H1 (cell line): ENCODE measurements at regions of chr2 and their contacts with region 1.

Region 1: DNA sequence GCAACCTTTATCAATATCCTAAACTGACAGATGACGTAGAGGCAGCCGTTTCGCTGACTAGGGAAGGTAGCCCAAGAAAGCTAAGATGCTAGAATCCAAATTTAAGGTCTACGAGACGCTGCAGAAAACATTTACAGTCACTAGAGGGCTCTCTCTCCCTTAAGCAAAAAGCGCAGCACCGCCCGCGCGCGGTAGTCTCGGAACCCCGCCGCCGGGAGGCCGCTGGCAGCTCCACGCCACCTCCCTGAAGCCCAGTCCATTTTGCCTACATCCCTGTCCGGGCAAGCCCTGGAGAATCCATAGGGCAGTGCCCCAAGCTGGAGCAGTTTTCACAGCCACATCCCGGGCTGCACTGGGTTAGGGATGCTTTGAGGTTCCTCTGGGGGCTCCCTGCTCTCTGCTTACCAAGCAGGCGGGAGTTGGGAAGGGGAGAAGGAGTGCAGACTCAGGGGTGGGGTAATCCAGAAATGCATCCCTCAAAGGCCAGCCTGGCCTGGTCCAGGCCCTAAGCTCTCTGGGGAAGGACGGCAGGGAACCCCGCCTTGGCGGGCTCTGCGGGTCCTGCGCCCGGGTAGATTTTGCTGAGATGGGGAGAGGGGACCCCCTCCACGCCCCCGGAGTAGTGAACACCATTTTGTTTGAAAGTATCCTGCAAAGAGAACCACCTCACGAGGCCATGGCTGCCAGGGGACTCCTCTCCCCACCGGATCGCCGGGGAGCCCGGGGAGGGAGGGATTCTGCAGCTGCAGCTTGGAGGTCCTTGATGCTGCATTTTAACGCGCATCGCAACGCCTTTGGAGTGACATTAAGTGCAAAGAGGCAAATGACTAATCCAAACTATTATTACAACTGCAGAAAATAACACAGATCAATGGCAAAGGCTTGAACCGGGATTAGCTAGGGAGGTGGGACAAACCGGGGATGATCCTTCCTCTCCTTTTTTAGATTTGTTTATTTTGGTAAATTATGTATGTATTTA is 1.3 kb upstream of the DPYSL5 start:
- DNase-seq: peak in 1 of 2 experiments; percentile 86
- H3K4me3 ChIP-seq: peak overlapping the region; percentile 54 to 91 (median 70); a peak in 7 of 8 replicates
- H3K27ac ChIP-seq: no peak overlapping the region
- H3K4me1 ChIP-seq: peaks cover 0 to 22% (median 8%) of the 10 kb centered on the region in 4 experiments; a peak in 4 of 7 replicates
- H3K27me3 ChIP-seq: peaks cover 30 to 61% (median 48%) of the 10 kb centered on the region in 4 experiments
- CTCF ChIP-seq: peak; percentile 48 to 96 (median 82)
- EP300 ChIP-seq: no peak
- POLR2A ChIP-seq: no peak
- RAD21 ChIP-seq: peak; percentile 89 to 94

Region 2: DNA sequence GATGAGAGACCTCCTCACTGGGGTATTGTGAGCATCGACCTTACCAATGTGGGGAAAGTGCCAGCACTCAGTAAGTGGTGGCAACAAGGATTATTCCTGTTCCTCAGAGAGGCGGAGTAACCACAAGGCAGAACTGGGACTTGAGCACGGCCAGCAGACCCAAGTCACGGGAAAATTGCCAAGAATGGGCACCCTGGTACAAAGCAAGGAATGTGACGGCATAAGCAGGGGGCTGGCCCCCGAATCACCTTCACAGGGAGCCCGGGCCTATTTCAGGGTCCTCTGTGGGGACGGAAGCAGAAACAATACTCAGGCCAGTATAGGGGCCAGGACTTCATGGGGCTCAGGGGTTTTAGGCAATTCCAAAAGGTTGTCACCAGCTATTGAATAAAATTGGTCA is 35.4 kb before region 1 on chr2:
- CTCF ChIA-PET with region 1: interaction called, 10 read pairs
- POLR2A ChIA-PET with region 1: no interaction called
- DNase-seq: no peak
- H3K4me3 ChIP-seq: no peak overlapping the region
- H3K27ac ChIP-seq: no peak overlapping the region
- H3K4me1 ChIP-seq: no peaks in the 10 kb centered on the region; a peak in 2 of 7 replicates
- H3K27me3 ChIP-seq: no peaks in the 10 kb centered on the region; a peak in 1 of 7 replicates
- CTCF ChIP-seq: no peak
- EP300 ChIP-seq: no peak
- POLR2A ChIP-seq: no peak
- RAD21 ChIP-seq: no peak

Region 3: DNA sequence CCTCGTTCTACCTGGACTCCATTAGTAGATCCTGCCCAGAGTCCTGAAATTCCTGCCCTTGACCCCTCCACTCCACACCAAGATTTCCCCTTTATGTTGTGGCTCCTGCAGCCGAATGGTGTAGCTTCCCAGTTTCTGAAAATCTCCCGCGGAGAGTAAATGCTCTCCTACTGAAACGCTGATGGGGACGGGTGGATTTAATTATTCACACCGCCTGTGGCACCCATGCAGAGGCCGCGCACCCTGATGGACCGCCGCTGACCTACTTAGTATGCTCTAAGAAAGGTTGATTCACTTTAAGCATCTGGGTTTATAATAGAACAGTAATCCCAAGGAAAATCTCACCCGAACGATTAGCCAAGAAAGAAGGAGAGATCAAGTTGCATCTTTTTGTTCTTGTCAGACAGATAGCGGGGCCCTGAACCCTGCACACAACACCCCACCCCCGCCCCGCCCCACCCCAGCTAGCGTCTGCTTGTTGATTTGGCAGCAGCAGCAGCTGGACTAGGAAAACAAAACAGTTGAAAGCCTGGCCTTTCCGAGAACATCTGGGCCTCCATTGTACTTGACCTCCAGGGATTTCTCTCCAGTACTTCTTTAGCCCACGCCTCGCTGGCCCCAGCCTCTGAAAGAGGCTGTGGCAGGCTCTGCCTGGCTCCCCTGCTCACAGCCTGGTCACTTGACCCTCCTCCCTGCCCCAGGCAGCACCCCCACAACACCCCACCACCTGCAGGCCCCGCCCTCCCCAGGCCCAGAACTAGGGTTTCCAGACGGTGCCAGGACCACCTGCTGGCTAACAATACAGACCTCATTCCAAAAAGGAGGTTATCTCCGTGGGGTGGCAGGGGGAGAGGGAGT is 54.9 kb after region 1 on chr2:
- CTCF ChIA-PET with region 1: interaction called, 10 read pairs
- POLR2A ChIA-PET with region 1: no interaction called
- DNase-seq: no peak
- H3K4me3 ChIP-seq: peak overlapping the region in 1 of 4 experiments; percentile 41; a peak in 1 of 8 replicates
- H3K27ac ChIP-seq: no peak overlapping the region
- H3K4me1 ChIP-seq: peaks cover 8 to 17% (median 12%) of the 10 kb centered on the region in 4 experiments; a peak in 6 of 7 replicates
- H3K27me3 ChIP-seq: 0 out of 7 replicates have a peak, but pooled peaks cover 0 to 2% (median 0%) of the 10 kb centered on the region in 4 experiments
- CTCF ChIP-seq: no peak
- EP300 ChIP-seq: no peak
- POLR2A ChIP-seq: no peak
- RAD21 ChIP-seq: no peak

Region 4: DNA sequence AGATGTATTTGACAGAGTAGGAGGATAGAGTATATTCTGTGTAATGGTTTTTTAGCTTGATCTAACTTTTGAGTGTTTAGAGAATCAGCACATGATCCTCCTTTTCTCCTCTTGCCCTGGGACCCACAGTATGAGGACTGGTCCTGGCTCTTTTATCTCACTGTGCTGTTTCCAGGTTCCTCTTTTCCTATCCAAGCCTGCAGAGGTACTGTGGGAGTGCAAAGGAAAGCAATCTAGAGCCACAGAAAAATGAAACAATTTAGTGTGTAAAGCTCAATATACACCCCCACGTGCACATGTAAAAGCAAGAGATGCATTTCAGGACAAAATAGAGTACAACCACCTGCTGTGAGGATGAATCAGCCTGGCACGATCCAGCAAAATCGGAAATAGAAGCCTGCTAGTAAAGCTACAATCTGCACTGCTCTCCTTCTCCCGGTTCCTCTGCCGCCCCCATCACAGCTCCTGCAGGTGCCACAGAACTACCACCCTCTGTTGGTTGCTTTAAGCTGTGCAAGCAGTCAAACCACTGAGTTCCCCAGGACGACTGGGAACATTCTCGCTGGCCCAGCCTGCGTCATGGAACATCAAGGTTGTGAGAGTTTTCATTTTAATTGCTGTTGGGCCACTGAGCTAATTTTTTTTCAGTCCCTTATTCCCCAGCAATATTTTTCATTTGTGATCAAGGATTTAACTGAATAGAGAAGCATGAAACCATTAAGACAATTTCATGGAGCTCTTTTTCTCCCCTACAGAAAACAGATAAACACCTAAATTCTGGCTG is 76.0 kb after region 1 on chr2:
- CTCF ChIA-PET with region 1: interaction called, 55 read pairs
- POLR2A ChIA-PET with region 1: interaction called, 6 read pairs
- DNase-seq: no peak
- H3K4me3 ChIP-seq: no peak overlapping the region
- H3K27ac ChIP-seq: no peak overlapping the region
- H3K4me1 ChIP-seq: peaks cover 0 to 8% (median 5%) of the 10 kb centered on the region in 4 experiments; a peak in 5 of 7 replicates
- H3K27me3 ChIP-seq: no peaks in the 10 kb centered on the region
- CTCF ChIP-seq: peak; percentile 82 to 88 (median 87)
- EP300 ChIP-seq: no peak
- POLR2A ChIP-seq: no peak
- RAD21 ChIP-seq: peak; percentile 79 to 84

Region 5: GRCh38 chr2:26952374-26952773 is 105.8 kb after region 1 on chr2:
- CTCF ChIA-PET with region 1: interaction called, 37 read pairs
- POLR2A ChIA-PET with region 1: no interaction called
- DNase-seq: no peak
- H3K4me3 ChIP-seq: no peak overlapping the region
- H3K27ac ChIP-seq: no peak overlapping the region
- H3K4me1 ChIP-seq: peaks cover 0 to 2% (median 0%) of the 10 kb centered on the region in 4 experiments; a peak in 1 of 7 replicates
- H3K27me3 ChIP-seq: no peaks in the 10 kb centered on the region
- CTCF ChIP-seq: no peak
- EP300 ChIP-seq: no peak
- POLR2A ChIP-seq: no peak
- RAD21 ChIP-seq: no peak

Region 6: DNA sequence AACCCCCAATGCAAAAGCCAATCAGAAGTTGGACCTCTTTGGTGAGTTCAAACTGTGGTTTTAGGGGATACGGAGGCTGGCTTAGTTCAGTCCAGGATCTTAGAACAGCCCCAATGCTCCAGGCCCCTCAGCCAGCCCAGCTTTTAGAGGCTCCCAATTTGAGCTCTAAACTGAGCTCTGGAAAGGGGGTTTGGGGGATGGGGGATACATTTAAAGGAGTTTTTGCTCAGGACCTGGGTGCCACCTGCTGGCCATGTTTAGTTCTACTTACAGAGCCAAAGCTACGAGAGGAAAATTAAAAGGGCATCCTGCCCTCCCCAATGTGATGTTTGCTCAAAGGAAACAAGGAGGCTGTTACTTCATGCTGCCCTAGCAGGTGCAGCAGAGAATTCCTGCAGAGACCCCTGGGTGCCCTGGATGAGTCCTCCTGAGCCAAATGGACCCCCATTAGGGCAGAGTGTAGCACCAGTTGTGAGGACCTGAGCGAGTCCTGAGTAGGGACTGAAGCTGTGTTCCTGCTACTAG is 170.2 kb after region 1 on chr2:
- CTCF ChIA-PET with region 1: interaction called, 94 read pairs
- POLR2A ChIA-PET with region 1: interaction called, 3 read pairs
- DNase-seq: peak; percentile 61 to 85
- H3K4me3 ChIP-seq: no peak overlapping the region
- H3K27ac ChIP-seq: no peak overlapping the region
- H3K4me1 ChIP-seq: peaks cover 3 to 6% (median 5%) of the 10 kb centered on the region in 4 experiments; a peak in 6 of 7 replicates
- H3K27me3 ChIP-seq: no peaks in the 10 kb centered on the region; a peak in 2 of 7 replicates
- CTCF ChIP-seq: peak in 2 of 3 experiments; percentile 80 to 83; a peak in 3 of 4 replicates
- EP300 ChIP-seq: peak in 1 of 2 experiments; percentile 39; a peak in 1 of 3 replicates
- POLR2A ChIP-seq: no peak
- RAD21 ChIP-seq: peak; percentile 91 to 92